PC-9 (cell line): ENCODE measurements at regions of chr9 and their contacts with region 1.

Region 1: GRCh38 chr9:105694190-105694847 is at the start of gene TMEM38B:
- DNase-seq: peak; percentile 53 to 86
- H3K4me3 ChIP-seq: peak within 1 kb of the TSS; percentile 87
- H3K27ac ChIP-seq: no peak within 1 kb of the TSS
- H3K4me1 ChIP-seq: peaks cover 15% of the 10 kb centered on the region
- H3K27me3 ChIP-seq: no peaks in the 10 kb centered on the region
- CTCF ChIP-seq: no peak
- total RNA-seq, gene TMEM38B: 19.0 and 19.5 TPM in 2 replicates

Region 2: DNA sequence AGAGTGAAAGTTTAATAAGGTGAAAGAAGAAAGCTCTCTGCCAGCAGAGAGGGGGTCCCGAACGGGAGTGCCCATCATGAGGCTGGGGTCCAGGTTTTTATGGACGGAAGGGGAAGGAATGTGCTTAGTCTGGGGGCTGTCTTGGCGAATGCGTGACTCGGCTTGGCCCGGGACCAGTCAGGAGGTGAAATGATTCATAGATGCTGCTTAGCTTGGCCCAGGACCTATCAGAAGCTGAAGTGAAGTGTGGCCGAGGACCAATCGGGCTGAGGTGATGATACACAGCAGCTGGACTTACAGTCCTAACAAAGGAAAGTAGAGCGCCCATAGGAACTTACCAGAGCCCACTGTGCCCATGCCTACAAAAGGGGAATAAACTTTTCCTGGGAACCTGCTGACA is 140.3 kb before region 1 on chr9:
- CTCF ChIA-PET with region 1: no interaction called
- POLR2A ChIA-PET with region 1: no interaction called
- intact Hi-C with region 1: no loop called
- DNase-seq: no peak
- H3K4me3 ChIP-seq: no peak overlapping the region
- H3K27ac ChIP-seq: no peak overlapping the region
- H3K4me1 ChIP-seq: peaks cover 7% of the 10 kb centered on the region; the same call in 1 of the 2 replicates
- H3K27me3 ChIP-seq: no peaks in the 10 kb centered on the region
- CTCF ChIP-seq: no peak

Region 3: GRCh38 chr9:105637787-105638395 is 56.4 kb before region 1 on chr9:
- CTCF ChIA-PET with region 1: no interaction called
- POLR2A ChIA-PET with region 1: no interaction called
- intact Hi-C with region 1: no loop called
- DNase-seq: no peak
- H3K4me3 ChIP-seq: no peak overlapping the region
- H3K27ac ChIP-seq: no peak overlapping the region
- H3K4me1 ChIP-seq: no peaks in the 10 kb centered on the region
- H3K27me3 ChIP-seq: no peaks in the 10 kb centered on the region
- CTCF ChIP-seq: peak; percentile 67

Region 4: DNA sequence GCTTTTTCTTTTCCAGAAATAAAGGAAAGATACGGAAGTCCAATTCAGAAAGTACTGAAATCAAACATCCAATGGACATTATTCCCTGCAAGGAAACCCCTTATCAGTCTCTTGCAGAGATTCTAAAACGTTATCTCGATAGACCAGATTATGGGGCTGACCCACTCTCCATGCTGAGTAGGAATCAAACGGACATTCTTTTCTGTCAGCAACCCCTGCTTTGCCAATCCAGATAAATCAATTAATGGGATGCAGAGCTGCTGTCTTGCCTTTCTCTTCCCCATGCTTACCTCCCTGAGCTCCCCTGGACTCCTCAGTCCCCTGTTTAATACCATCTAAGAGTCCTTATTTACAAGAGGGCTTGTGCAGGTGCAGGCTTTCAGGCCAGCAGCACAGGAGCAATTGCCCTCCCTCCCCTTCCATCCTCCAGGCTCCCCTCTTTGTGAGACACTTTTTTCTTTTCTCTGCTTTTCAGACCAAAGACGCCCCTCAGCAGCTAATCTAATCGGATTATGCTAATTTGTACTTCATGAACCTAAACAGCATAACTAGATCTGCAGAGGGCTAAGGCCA is 17.9 kb before region 1 on chr9:
- CTCF ChIA-PET with region 1: no interaction called
- POLR2A ChIA-PET with region 1: no interaction called
- intact Hi-C with region 1: loop called (anchors 2 kb)
- DNase-seq: no peak
- H3K4me3 ChIP-seq: no peak overlapping the region
- H3K27ac ChIP-seq: no peak overlapping the region
- H3K4me1 ChIP-seq: no peaks in the 10 kb centered on the region
- H3K27me3 ChIP-seq: no peaks in the 10 kb centered on the region
- CTCF ChIP-seq: no peak

Region 5: GRCh38 chr9:105751761-105752160 is 57.4 kb after region 1 on chr9:
- CTCF ChIA-PET with region 1: no interaction called
- POLR2A ChIA-PET with region 1: no interaction called
- intact Hi-C with region 1: no loop called
- DNase-seq: no peak
- H3K4me3 ChIP-seq: no peak overlapping the region
- H3K27ac ChIP-seq: no peak overlapping the region
- H3K4me1 ChIP-seq: no peaks in the 10 kb centered on the region
- H3K27me3 ChIP-seq: no peaks in the 10 kb centered on the region
- CTCF ChIP-seq: no peak